ENCODE measurements at regions of chr11 and their contacts with region 1.

Region 1: GRCh38 chr11:128814856-128815705 is 52.0 kb downstream of the KCNJ1 start:
- DNase-seq: peak; percentile 49 to 80
- ATAC-seq: peak; percentile 64 to 96 (median 85)
- H3K4me3 ChIP-seq: no peak overlapping the region
- H3K27ac ChIP-seq: peak overlapping the region in 1 of 10 donors; percentile 19
- H3K4me1 ChIP-seq: peaks cover 0 to 7% (median 0%) of the 10 kb centered on the region in 9 donors
- H3K27me3 ChIP-seq: no peaks in the 10 kb centered on the region
- CTCF ChIP-seq: no peak

Region 2: DNA sequence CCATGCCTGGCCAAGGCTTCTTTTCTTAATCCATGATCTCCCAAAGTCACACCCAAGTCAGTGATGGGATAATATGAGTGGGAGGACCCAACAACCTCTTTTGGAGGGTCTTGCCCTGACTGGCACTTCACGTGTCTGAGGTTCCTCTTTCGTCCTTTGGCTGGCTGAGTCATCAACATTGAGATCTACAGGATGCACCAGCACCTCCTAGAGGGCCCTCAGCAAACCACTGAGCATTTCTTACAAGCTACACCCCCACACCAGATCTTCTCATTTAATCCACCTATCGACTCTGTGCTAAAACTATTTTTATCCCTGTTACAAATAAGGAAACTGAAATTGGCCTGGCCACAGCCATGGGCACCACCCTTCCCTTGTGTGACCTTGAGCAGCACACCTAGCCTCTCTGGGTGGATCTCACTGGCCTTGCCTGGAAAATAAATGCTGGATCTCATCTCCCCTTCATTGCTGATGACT is 57.8 kb before region 1 on chr11:
- intact Hi-C with region 1: no loop called
- DNase-seq: peak in 1 of 2 donors; percentile 49
- ATAC-seq: peak; percentile 61 to 85 (median 72)
- H3K4me3 ChIP-seq: no peak overlapping the region
- H3K27ac ChIP-seq: peak overlapping the region in 1 of 10 donors; percentile 10
- H3K4me1 ChIP-seq: peaks cover 0 to 50% (median 17%) of the 10 kb centered on the region in 9 donors
- H3K27me3 ChIP-seq: no peaks in the 10 kb centered on the region
- CTCF ChIP-seq: peak in 8 of 9 donors; percentile 20 to 73 (median 40)

Region 3: DNA sequence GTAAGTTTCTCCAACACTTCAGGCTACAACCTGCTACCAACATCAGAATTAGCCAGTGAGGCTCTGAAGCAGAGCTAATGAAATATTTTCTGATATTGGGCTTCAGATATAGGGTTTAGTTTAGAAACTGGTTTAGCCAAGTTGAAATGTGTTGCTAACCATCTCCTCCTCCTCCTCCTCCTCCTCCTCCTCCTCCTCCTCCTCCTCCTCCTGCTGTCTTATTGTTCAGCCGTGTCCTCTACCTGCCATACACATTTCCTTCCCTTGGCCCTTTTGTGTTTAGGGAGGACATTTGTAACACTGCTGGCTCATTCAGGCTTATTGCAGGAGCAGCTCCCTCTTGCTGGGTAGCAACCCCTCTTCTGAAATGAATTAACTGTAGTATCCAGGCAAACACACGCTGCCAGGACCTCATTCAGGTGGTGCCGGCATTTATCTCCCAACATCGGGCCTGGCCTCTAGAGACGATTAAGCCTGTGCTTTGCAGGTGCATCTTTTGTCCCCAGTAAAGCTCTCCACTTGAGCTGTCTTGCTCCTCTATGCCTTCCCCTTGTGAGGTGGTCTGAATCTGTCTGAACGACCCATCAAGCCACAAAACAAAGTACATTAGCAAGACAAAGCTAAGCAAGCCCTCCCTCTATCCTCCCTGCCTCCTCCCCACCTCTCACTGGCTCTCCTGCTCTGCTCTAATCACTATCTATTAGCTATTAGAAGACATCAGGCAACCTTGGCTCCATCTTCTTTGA is 30.8 kb before region 1 on chr11:
- intact Hi-C with region 1: loop called in 1 of 10 experiments (anchors 5 kb)
- DNase-seq: no peak
- ATAC-seq: no peak
- H3K4me3 ChIP-seq: no peak overlapping the region
- H3K27ac ChIP-seq: no peak overlapping the region
- H3K4me1 ChIP-seq: peaks cover 0 to 42% (median 12%) of the 10 kb centered on the region in 9 donors
- H3K27me3 ChIP-seq: no peaks in the 10 kb centered on the region
- CTCF ChIP-seq: no peak